ENCODE measurements at regions of chr13 and their contacts with region 1.

Region 1: DNA sequence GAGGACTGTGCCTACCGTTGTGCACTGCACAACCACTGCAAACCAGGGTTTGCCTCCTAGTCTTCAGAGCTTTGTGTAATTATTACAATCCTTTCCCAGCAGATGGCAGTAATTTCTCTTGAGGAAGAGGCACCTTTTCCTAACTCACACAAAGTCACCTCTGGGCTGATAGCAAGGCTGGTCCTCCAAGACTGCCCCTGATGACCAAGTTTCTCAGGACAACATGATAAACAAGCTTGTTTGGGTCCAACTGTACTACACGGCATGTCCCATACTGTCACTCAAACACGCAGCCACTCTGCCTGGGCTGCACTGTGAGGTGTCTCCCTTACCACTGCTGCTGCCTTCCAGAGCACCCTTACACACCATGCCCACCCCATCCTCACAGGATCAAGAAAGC is 39.3 kb downstream of the RFXAP start:
- DNase-seq: no peak
- ATAC-seq: peak; percentile 91

Region 2: GRCh38 chr13:36981156-36981743 is 123.0 kb after region 1 on chr13:
- intact Hi-C with region 1: loop called in 1 of 2 experiments (anchors 5 kb)
- DNase-seq: no peak
- ATAC-seq: peak; percentile 63

Measured in left colon (tissue), 2 donors.